ENCODE measurements at regions of chr5 and their contacts with region 1.

Region 1: DNA sequence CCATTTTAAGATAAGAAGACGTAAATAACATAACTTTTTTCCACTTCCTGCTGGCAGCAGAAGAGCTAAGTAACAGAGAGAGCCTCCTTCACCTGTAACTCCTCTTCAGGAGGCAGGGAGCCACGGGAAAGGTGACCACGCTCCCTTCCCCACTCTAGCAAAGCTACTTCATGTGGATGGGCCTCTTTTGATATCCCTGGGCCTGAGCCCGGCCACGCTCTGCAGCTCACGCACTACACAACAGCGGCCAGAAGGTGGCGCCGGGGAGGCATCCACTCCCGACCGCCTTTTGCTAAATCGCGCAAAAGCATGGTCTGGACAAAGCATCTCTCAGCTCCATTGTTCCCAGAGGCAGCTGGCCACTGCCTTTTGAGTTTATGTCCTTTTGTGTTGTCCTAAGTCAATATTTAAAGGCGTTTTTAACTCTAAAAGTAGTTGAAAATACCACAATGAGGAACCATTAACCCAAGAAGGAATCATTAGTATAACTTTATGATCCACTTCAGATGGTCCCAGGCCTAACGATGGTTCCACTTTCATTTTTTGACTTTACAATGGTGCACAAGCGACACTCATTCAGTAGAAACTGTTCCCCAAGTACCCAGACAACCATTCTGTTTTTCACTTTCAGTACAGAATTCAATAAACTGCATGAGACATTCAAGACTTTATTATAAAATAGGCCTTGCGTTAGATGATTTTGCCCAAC is 23.6 kb downstream of the CMBL start:
- DNase-seq: peak; percentile 82
- H3K4me3 Mint-ChIP-seq: no peak overlapping the region
- H3K27ac Mint-ChIP-seq: no peak overlapping the region
- H3K4me1 Mint-ChIP-seq: peaks cover 7% of the 10 kb centered on the region
- H3K27me3 Mint-ChIP-seq: peaks cover 2% of the 10 kb centered on the region

Region 2: DNA sequence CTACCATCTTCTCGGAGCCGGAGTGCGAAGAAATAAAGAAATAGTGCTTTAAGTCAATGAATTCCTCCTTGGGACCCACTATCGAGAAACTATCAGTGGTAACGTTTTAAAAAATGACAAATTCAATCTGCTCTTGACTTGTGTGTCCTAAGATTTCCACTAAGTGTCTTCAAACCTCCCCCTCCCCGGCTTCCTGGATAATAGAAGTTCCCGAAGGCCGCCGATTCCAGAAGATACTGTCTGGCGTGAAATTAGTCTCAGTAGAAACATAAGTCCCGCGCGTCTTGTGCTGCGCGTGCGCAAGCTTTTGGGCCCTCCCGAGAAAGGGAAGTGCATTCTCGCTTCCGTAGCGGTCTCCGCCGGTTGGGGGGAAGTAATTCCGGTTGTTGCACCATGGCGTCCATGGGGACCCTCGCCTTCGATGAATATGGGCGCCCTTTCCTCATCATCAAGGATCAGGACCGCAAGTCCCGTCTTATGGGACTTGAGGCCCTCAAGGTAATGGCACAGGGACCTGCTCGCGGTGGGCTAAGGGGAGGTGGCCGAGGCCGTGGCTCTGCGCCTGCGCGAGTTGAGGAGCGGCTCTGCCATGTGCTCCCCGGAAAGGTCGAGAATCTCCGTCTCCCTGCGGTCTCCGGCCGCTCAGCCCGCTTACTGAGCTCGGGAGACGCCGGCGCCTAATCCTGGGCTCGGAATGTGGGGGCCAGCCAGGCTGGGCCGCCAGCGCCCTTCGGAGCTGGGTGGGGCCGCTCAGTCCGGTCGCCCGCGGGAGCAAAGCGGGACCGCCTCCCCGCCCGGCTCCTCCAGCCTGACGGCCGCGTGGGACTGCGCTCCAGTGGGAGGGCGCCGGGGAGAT is 33.9 kb before region 1 on chr5 and contains the start of gene CCT5:
- CTCF ChIA-PET with region 1: interaction called, 3 read pairs
- intact Hi-C with region 1: loop called (anchors 2 kb)
- DNase-seq: peak; percentile 93
- H3K4me3 Mint-ChIP-seq: peak within 1 kb of the TSS; percentile 86
- H3K27ac Mint-ChIP-seq: peak within 1 kb of the TSS; percentile 99
- H3K4me1 Mint-ChIP-seq: peaks cover 47% of the 10 kb centered on the region
- H3K27me3 Mint-ChIP-seq: no peaks in the 10 kb centered on the region
- total RNA-seq, gene CCT5: 414 to 419 TPM

Region 3: DNA sequence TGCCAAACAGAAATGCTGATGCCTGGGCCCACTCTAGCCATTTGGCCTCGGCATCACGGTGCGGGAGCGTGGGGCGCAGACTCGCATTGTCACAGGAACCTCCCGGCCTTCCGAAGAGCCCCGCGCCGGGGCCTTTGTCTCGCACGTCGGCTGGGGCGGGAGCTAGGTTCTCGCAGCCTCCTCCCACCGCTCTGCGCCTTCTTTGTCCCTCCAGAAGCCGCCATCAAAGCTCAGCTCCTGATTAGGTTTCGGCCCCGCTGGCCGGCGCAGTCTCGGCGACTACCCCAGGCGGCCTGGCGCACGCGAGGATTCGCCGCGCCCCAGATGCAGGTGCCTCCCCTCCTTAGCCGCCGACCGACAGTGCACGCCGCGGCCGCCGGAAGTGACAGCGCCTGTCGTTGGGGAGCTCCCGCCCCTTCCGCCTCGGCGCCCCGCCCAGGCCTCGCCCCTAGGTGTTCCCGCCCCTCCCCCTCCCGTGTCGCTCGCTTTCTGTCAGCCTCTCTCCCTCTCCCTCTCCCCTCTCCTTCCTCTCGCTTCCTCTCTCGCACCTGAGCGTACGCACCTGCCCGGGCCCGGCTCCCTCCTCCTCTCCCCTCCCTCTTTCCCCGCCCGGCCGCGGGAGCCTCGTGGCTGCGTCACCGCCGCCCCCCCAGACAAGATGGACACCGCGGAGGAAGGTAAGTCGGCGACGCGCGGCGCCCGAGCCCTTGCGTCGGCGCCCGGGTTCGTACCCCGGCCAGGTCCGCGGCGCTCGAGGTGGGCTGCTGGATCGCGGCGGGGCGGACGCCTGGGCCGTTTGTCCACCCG is 69.4 kb after region 1 on chr5 and contains the start of gene MARCHF6:
- CTCF ChIA-PET with region 1: interaction called, 6 read pairs
- intact Hi-C with region 1: loop called (anchors 5 kb)
- DNase-seq: peak; percentile 96
- H3K4me3 Mint-ChIP-seq: peak within 1 kb of the TSS; percentile 99
- H3K27ac Mint-ChIP-seq: peak within 1 kb of the TSS; percentile 98
- H3K4me1 Mint-ChIP-seq: peaks cover 39% of the 10 kb centered on the region
- H3K27me3 Mint-ChIP-seq: no peaks in the 10 kb centered on the region
- total RNA-seq, gene MARCHF6: 72.5 to 76.8 TPM

Region 4: DNA sequence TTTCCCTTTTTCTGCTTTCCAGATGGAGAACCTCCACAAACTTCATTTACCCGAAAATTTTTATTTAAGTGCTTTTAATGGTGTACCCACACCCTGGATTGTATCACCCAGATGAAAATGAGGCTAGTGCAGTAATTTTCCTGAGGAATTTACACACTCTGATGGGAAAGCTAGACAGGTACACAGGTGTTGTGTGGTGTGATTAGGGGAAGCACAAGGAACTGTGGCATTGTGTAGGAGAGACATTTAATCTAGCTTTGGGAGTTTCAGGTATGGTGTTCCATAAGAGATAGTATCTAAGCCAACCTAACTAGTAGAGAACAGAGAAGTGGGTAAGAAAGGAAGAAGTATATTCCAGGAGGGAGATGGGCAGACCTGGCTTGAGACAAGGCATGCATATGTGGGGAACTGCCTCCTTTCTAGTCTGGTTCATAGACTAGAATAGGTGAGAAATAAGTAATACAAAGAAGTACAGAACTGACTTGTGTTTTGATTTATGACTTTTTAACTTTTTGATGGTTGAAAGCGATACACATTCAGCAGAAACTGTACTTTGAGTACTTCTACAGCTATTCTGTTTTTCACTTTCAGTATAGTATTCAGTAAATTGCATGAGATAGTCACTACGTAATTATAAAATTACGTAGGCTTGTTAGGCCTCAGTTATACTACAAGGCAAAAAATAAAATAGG is 134.7 kb after region 1 on chr5:
- CTCF ChIA-PET with region 1: interaction called, 29 read pairs
- intact Hi-C with region 1: loop called (anchors 1 kb)
- DNase-seq: peak; percentile 21
- H3K4me3 Mint-ChIP-seq: no peak overlapping the region
- H3K27ac Mint-ChIP-seq: no peak overlapping the region
- H3K4me1 Mint-ChIP-seq: peaks cover 52% of the 10 kb centered on the region
- H3K27me3 Mint-ChIP-seq: no peaks in the 10 kb centered on the region

Region 5: DNA sequence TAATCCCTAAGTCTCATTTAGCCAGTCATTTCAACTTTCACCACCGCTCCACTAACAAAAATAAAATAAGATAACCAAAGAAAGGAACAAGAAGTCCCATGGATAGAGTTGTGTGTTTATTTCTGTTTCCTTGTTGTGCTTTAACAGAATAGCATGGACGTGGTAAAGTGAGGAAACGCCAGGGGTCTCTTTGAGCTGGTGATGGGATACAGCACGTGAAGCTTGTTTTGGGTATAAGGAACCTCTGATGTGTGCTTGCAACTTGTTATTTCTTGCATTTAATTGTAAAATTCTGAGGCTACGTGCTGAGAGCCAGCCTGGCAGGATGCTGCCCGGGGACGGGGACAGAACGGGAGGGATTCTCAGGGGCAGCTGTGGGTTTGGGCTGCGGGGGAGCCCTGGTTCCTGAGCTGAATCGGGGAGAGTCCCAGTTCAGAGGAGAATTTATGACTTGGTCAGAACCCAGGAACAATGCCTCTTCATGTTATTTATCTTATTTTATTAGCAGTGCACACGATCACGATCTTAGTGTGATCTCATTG is 343.1 kb after region 1 on chr5:
- CTCF ChIA-PET with region 1: interaction called, 12 read pairs
- intact Hi-C with region 1: loop called (anchors 1 kb)
- DNase-seq: peak; percentile 38
- H3K4me3 Mint-ChIP-seq: peak overlapping the region; percentile 76
- H3K27ac Mint-ChIP-seq: no peak overlapping the region
- H3K4me1 Mint-ChIP-seq: peaks cover 26% of the 10 kb centered on the region
- H3K27me3 Mint-ChIP-seq: peaks cover 6% of the 10 kb centered on the region